Activated CD4-positive, alpha-beta memory T cell treated with anti-CD3 and anti-CD28 coated beads for 36 hours (primary cell): ENCODE measurements at regions of chr5 and their contacts with region 1.

Region 1: DNA sequence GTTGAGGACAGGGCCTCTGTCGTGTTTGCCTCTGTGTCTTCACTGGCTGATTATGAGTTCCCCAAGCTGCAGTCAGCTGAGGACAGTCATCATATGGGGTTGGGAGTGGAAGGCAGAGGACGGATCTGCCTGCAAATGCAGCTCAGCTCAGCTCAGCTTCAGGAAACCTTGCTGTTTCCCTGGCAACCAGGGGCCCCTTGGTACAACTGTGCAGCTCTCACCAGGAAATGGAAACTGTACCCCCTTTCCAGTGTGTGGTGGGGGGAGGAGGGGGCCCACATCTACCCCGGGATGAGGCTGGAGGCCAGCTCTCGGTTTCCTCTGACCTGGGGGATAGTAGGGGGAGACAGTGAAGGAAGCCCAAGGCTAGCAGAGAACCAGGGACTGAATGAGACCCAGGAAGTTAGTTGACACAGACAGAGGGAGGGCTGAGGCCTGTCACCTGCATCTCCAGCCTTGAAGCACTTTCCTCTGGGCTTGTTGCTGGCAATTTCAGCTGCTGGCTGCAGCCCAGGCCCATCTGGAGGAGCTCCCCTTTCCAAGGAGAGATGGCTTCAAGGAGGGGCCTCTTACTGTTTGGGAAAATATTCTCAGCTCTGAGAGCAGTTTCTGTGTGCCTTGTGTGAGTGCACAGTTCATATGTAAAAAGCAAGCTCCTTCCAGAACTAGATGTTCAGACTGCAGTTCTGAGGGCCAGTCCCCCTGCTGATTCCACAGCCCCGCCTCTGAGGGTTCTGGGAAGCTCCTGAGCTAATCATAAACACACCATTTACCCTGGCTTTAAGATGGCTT is 6.9 kb downstream of the ANXA6 start:
- DNase-seq: peak; percentile 87
- H3K4me3 Mint-ChIP-seq: peak overlapping the region; percentile 36
- H3K27ac Mint-ChIP-seq: peak overlapping the region; percentile 90
- H3K4me1 Mint-ChIP-seq: peaks cover 94% of the 10 kb centered on the region
- H3K27me3 Mint-ChIP-seq: no peaks in the 10 kb centered on the region

Region 2: DNA sequence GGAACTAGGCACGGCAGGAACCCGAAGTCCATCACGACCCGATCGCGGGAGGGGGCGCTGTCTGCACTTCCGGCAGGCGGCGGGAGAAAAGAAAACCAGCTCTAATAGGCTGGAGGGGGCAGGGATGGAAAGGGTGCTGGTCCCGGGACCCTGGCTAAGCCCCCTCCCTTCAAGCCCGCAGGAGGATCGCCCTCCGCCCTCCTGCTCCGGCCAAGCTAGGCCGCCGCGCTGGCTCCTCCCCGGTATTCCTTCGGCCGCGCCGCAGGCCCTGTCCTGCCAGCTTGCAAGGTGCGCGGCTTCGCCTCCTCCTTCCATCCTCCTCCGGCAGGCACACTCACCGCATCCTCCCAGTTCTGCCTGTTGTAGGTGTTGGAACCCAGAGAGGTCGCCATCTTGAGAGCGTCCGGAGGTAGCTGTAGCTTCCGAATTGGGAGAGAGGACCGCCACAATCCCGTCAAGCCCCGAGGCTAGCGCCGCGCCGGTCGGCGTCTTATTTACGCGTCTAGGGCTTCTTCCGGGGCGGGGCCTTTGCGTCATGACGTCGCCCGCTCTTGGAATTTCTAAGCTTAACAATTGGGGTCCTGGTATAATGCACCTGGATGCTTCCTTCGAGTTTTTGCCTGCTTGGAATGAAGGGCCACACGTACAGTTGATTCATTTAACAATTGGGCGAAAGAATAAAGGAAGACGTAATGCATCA is 449.9 kb before region 1 on chr5 and contains the start of gene RBM22:
- CTCF ChIA-PET with region 1: no interaction called
- POLR2A ChIA-PET with region 1: no interaction called
- intact Hi-C with region 1: loop called (anchors 5 kb)
- DNase-seq: peak; percentile 95
- H3K4me3 Mint-ChIP-seq: no peak within 1 kb of the TSS
- H3K27ac Mint-ChIP-seq: no peak within 1 kb of the TSS
- H3K4me1 Mint-ChIP-seq: peaks cover 7% of the 10 kb centered on the region
- H3K27me3 Mint-ChIP-seq: no peaks in the 10 kb centered on the region
- total RNA-seq, gene RBM22: 59.6 to 66.4 TPM

Region 3: DNA sequence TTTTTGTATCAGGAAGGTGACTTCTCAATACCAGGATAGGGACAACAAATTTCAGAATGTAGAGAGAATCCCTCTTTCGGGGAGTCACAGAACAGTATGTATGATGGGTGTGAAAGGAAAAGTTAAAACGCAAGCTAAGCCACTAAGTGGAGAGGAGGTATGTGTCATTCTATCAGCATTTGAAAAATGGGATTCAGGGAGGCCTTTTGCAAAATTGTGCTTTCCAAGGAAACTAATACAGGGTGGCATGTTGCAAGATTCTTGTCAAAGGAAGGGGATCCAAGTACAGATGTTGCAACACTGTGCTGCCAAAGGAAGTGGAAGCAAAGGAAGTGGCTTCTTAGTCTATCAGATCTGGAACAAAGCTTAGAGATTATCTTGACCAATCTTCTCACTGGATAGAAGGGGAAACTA is 57.2 kb before region 1 on chr5:
- CTCF ChIA-PET with region 1: no interaction called
- POLR2A ChIA-PET with region 1: interaction called, 4 read pairs
- intact Hi-C with region 1: loop called (anchors 1 kb)
- DNase-seq: no peak
- H3K4me3 Mint-ChIP-seq: peak overlapping the region; percentile 65
- H3K27ac Mint-ChIP-seq: peak overlapping the region; percentile 92
- H3K4me1 Mint-ChIP-seq: peaks cover 64% of the 10 kb centered on the region
- H3K27me3 Mint-ChIP-seq: no peaks in the 10 kb centered on the region

Region 4: GRCh38 chr5:151213800-151214613 is 63.3 kb after region 1 on chr5:
- CTCF ChIA-PET with region 1: interaction called, 3 read pairs
- POLR2A ChIA-PET with region 1: no interaction called
- intact Hi-C with region 1: loop called (anchors 1 kb)
- DNase-seq: peak; percentile 94
- H3K4me3 Mint-ChIP-seq: peak overlapping the region; percentile 82
- H3K27ac Mint-ChIP-seq: peak overlapping the region; percentile 97
- H3K4me1 Mint-ChIP-seq: peaks cover 69% of the 10 kb centered on the region
- H3K27me3 Mint-ChIP-seq: no peaks in the 10 kb centered on the region

Region 5: GRCh38 chr5:151758430-151759241 is 608.0 kb after region 1 on chr5 and contains the start of gene ATOX1:
- CTCF ChIA-PET with region 1: no interaction called
- POLR2A ChIA-PET with region 1: no interaction called
- intact Hi-C with region 1: loop called (anchors 5 kb)
- DNase-seq: peak; percentile 94
- H3K4me3 Mint-ChIP-seq: peak within 1 kb of the TSS; percentile 77
- H3K27ac Mint-ChIP-seq: peak within 1 kb of the TSS; percentile 69
- H3K4me1 Mint-ChIP-seq: peaks cover 32% of the 10 kb centered on the region
- H3K27me3 Mint-ChIP-seq: no peaks in the 10 kb centered on the region
- total RNA-seq, gene ATOX1: 83.1 to 89.9 TPM